ENCODE measurements at regions of chr1 and their contacts with region 1.

Region 1: GRCh38 chr1:102825990-102826389 is 282.3 kb downstream of the COL11A1 start:
- DNase-seq: no peak
- ATAC-seq: no peak
- H3K4me3 ChIP-seq: no peak overlapping the region
- H3K4me3 Mint-ChIP-seq: no peak overlapping the region
- H3K27ac ChIP-seq: no peak overlapping the region
- H3K27ac Mint-ChIP-seq: no peak overlapping the region
- H3K4me1 ChIP-seq: no peaks in the 10 kb centered on the region
- H3K4me1 Mint-ChIP-seq: no peaks in the 10 kb centered on the region
- H3K27me3 ChIP-seq: no peaks in the 10 kb centered on the region
- H3K27me3 Mint-ChIP-seq: no peaks in the 10 kb centered on the region
- CTCF ChIP-seq: no peak

Region 2: DNA sequence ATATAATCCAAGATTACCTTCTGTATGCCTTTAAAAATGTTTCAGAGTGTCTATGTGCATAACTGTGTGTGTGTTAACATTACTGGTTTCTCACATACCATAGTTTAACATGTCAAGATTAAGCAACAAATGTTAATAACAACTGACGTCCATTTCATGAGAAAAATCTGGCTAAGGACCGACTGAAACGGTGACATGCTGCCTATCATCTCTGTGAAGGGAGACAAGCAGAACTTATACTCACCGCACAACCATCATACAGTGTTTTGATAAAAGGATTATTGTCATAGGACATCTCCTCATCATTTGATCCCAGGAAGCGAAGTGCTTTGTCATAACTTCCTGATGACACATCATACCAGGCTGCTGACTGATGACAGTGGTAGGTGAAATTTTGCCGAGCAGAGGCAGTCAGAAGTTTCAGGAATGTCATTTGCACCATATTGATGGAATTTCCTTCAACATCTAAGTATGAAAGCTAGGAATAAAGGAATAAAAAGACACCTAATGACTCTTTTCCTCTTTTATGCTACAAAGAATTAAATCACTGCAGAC is 53.5 kb after region 1 on chr1:
- CTCF ChIA-PET with region 1: no interaction called
- POLR2A ChIA-PET with region 1: no interaction called
- intact Hi-C with region 1: loop called (anchors 5 kb)
- DNase-seq: no peak
- ATAC-seq: no peak
- H3K4me3 ChIP-seq: no peak overlapping the region
- H3K4me3 Mint-ChIP-seq: no peak overlapping the region
- H3K27ac ChIP-seq: no peak overlapping the region
- H3K27ac Mint-ChIP-seq: no peak overlapping the region
- H3K4me1 ChIP-seq: no peaks in the 10 kb centered on the region
- H3K4me1 Mint-ChIP-seq: no peaks in the 10 kb centered on the region
- H3K27me3 ChIP-seq: no peaks in the 10 kb centered on the region
- H3K27me3 Mint-ChIP-seq: no peaks in the 10 kb centered on the region
- CTCF ChIP-seq: no peak